ENCODE measurements at regions of chr15 and their contacts with region 1.

Region 1: DNA sequence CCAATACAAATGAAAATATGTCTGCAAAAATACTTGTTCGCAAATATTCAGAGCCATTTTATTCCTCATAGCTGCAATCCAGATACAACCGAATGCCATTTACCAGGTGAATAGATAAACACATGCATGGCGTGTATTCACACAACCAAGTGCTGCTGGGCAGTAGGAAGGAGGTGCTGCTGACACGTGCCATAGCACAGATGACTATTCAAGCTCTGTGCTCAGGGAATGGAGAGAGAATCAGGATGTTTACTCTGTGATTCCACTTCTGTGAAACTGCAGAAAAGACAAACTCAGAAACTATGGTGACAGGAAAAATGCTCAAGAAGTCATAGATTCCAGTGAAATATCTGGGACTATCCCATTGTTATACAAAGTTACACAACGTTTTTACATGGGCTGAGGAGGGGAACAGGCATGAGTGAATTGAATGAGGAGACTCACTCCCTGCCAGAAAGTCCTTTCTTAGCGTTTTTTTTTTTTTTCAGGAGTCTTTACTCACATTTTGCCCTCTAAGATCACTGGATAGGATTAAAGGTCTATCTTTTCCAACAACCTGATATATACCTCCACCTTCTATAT is 152.9 kb upstream of the NDN start:
- DNase-seq: peak in 1 of 2 donors; percentile 5
- H3K4me3 ChIP-seq: no peak overlapping the region
- H3K27ac ChIP-seq: no peak overlapping the region
- H3K4me1 ChIP-seq: no peaks in the 10 kb centered on the region
- H3K27me3 ChIP-seq: no peaks in the 10 kb centered on the region
- CTCF ChIP-seq: no peak
- EP300 ChIP-seq: no peak
- POLR2A ChIP-seq: no peak

Region 2: GRCh38 chr15:23663225-23663624 is 176.8 kb before region 1 on chr15:
- intact Hi-C with region 1: loop called (anchors 10 kb)
- DNase-seq: no peak
- H3K4me3 ChIP-seq: no peak overlapping the region
- H3K27ac ChIP-seq: no peak overlapping the region
- H3K4me1 ChIP-seq: no peaks in the 10 kb centered on the region
- H3K27me3 ChIP-seq: peaks cover 0 to 4% (median 0%) of the 10 kb centered on the region in 3 donors
- CTCF ChIP-seq: peak in 1 of 7 experiments; percentile 19
- EP300 ChIP-seq: no peak
- POLR2A ChIP-seq: no peak

Region 3: GRCh38 chr15:23983500-23984259 is 143.7 kb after region 1 on chr15:
- intact Hi-C with region 1: no loop called
- DNase-seq: no peak
- H3K4me3 ChIP-seq: no peak overlapping the region
- H3K27ac ChIP-seq: no peak overlapping the region
- H3K4me1 ChIP-seq: no peaks in the 10 kb centered on the region
- H3K27me3 ChIP-seq: no peaks in the 10 kb centered on the region
- CTCF ChIP-seq: no peak
- EP300 ChIP-seq: no peak
- POLR2A ChIP-seq: no peak

Measured in stomach (tissue), 19 donors.